ENCODE measurements at regions of chr11 and their contacts with region 1.

Region 1: DNA sequence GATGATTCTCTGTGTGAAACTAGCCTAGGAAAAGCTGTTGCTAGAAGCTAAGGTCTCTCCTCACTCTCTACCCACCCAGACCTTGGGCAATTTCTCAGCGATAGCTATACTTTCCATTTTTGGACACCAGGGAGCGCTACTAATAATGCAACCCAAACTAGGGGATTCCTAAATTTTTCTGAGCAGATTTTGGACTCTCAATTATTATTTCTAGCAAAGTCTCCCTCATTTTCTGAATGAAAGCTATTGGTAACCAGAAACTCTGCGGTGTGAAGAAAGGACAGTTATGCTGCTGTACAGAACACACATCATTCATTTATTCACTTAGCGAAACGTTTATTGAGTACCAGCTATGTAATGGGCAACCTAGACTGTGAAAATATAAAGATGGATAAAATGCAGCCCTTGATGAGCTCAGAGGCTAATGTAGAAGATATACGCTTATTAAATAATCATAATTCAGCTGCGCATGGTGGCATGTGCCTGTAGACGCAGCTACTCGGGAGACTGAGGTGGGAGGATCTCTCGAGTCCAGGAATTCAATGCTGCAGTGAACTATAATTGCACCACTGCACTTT is 6.1 kb upstream of the STIM1 start:
- DNase-seq: peak; percentile 68
- ATAC-seq: peak; percentile 61
- H3K4me3 Mint-ChIP-seq: no peak overlapping the region
- H3K27ac Mint-ChIP-seq: no peak overlapping the region
- H3K4me1 Mint-ChIP-seq: peaks cover 49% of the 10 kb centered on the region
- H3K27me3 Mint-ChIP-seq: no peaks in the 10 kb centered on the region

Region 2: GRCh38 chr11:3867209-3868091 is 18.1 kb after region 1 on chr11:
- CTCF ChIA-PET with region 1: interaction called, 133 read pairs
- POLR2A ChIA-PET with region 1: interaction called, 16 read pairs
- DNase-seq: no peak
- ATAC-seq: no peak
- H3K4me3 Mint-ChIP-seq: no peak overlapping the region
- H3K27ac Mint-ChIP-seq: peak overlapping the region; percentile 48
- H3K4me1 Mint-ChIP-seq: peaks cover 87% of the 10 kb centered on the region
- H3K27me3 Mint-ChIP-seq: no peaks in the 10 kb centered on the region

Region 3: DNA sequence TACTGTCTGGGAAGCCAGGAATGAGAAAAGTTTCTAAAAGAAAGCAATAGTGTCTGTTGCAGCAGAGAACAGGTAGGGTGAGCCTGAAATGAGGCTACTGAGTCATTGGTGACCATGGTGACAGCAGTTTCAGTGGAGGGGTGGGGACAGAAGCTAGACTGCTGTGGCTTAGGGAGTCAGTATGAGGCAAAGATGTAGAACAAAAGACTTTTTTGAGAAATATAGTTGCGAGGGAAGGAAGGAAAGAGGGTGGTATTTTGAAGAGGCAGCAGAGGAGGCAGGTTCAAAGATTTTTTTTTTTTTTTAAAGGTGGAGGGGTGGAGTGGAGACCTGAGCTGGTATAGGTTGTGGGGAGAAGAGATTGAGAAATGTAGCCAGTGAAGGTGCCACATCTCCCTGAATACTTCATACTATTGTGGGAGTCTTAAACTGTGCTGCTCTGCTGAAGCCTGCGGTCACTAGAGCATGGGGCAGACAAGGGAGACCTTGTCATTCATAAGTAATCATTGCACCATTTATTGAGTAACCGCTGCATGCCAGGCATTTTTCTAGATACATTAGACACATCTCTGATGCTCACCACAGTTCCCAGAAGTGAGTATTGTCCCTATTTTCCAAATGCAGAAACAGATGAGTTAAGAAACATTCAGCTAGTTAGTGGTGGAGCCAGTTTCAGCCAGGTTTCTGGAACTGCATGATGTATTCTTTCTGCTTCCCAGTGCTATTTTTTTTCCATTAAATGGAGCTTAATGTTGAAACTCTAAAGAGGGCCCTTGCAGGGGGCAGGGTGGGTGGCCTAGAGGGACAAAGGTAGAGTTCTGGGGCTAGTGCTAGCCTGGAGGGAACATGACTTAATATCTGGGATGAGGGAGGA is 55.9 kb after region 1 on chr11:
- CTCF ChIA-PET with region 1: interaction called, 27 read pairs
- POLR2A ChIA-PET with region 1: interaction called, 14 read pairs
- DNase-seq: peak; percentile 79
- ATAC-seq: peak; percentile 96
- H3K4me3 Mint-ChIP-seq: no peak overlapping the region
- H3K27ac Mint-ChIP-seq: peak overlapping the region; percentile 66
- H3K4me1 Mint-ChIP-seq: peaks cover 70% of the 10 kb centered on the region
- H3K27me3 Mint-ChIP-seq: no peaks in the 10 kb centered on the region

Region 4: DNA sequence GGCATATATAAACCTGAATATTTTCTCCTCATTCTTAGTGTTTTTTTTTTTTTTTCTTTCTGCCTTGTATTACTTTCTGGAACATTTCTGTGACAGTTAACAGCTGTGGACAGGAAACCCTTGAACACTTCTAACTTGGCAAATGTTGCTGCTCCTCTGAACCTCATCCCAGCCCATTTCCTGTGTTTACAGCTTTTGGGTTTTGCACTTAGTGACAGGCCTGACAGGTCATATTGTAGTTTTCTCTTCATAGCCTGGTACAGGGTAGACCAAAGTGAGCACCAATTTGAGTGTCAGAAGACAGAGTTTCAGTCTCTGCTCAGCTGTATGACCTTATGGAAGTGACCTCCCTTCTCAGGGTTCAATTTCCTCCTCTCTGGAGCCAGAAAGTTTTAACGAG is 97.7 kb after region 1 on chr11:
- CTCF ChIA-PET with region 1: interaction called, 74 read pairs
- POLR2A ChIA-PET with region 1: interaction called, 19 read pairs
- DNase-seq: peak; percentile 83
- ATAC-seq: peak; percentile 76
- H3K4me3 Mint-ChIP-seq: peak overlapping the region; percentile 69
- H3K27ac Mint-ChIP-seq: peak overlapping the region; percentile 96
- H3K4me1 Mint-ChIP-seq: peaks cover 93% of the 10 kb centered on the region
- H3K27me3 Mint-ChIP-seq: no peaks in the 10 kb centered on the region

Region 5: GRCh38 chr11:3984896-3985295 is 135.5 kb after region 1 on chr11:
- CTCF ChIA-PET with region 1: interaction called, 64 read pairs
- POLR2A ChIA-PET with region 1: interaction called, 10 read pairs
- DNase-seq: peak; percentile 64
- ATAC-seq: peak; percentile 70
- H3K4me3 Mint-ChIP-seq: no peak overlapping the region
- H3K27ac Mint-ChIP-seq: peak overlapping the region; percentile 9
- H3K4me1 Mint-ChIP-seq: peaks cover 82% of the 10 kb centered on the region
- H3K27me3 Mint-ChIP-seq: no peaks in the 10 kb centered on the region